ENCODE measurements at regions of chr1 and their contacts with region 1.

Region 1: GRCh38 chr1:53182111-53182593 is 14.5 kb upstream of the CPT2 start:
- DNase-seq: no peak
- H3K4me3 ChIP-seq: no peak overlapping the region
- H3K27ac ChIP-seq: peak overlapping the region in 3 of 4 donors; percentile 8 to 79 (median 35)
- H3K4me1 ChIP-seq: peaks cover 0 to 14% (median 10%) of the 10 kb centered on the region in 3 donors
- H3K27me3 ChIP-seq: peaks cover 0 to 4% (median 0%) of the 10 kb centered on the region in 4 donors
- CTCF ChIP-seq: peak; percentile 78 to 92 (median 87)
- POLR2A ChIP-seq: no peak

Region 2: GRCh38 chr1:52702886-52703787 is 479.0 kb before region 1 on chr1:
- intact Hi-C with region 1: loop called (anchors 10 kb)
- DNase-seq: peak; percentile 80
- H3K4me3 ChIP-seq: peak overlapping the region; percentile 42 to 73 (median 55)
- H3K27ac ChIP-seq: peak overlapping the region; percentile 77 to 91 (median 84)
- H3K4me1 ChIP-seq: peaks cover 9 to 43% (median 11%) of the 10 kb centered on the region in 3 donors
- H3K27me3 ChIP-seq: no peaks in the 10 kb centered on the region
- CTCF ChIP-seq: no peak
- POLR2A ChIP-seq: peak in 1 of 4 donors; percentile 46

Region 3: DNA sequence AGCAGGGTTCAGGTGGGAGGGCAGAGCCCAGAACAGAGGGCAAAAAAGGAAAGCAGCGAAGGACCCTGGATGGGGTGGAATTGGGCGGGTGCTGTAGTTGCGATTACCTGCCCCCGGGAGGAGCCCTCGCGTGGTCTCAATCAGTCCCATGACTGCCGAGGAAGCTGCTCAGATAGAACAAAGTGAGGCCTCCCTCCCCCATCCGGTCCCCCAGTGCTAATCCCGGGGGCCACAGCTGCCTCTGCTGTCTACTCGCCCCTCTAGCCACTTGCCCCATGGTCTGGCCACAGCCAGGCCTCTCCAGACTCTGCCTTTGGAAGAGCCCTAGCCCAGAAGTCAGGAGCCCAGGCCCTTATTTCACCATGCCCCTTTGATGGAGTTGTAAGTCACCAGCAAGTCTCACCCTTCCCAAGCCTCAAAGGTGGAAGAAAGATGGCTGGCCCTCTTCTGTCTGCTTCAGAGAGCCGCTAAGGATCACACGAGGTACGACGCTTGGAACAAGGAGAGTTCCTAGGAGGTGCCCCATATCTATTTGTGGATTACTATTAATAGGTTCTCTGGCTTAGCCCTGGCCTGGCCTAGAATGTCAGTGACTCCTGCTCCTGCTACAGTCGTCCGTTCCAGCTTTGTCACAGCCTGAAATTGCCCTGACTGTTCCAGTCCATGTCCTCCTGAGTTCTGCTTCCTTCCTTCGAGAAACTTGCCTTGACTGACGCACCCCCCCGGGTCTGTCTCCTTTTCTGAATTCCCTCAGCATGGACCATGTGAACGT is 277.0 kb before region 1 on chr1:
- intact Hi-C with region 1: loop called (anchors 10 kb)
- DNase-seq: no peak
- H3K4me3 ChIP-seq: no peak overlapping the region
- H3K27ac ChIP-seq: no peak overlapping the region
- H3K4me1 ChIP-seq: peaks cover 0 to 20% (median 4%) of the 10 kb centered on the region in 3 donors
- H3K27me3 ChIP-seq: no peaks in the 10 kb centered on the region
- CTCF ChIP-seq: peak in 2 of 6 experiments; percentile 23 to 39
- POLR2A ChIP-seq: no peak

Region 4: GRCh38 chr1:52976183-52977035 is 205.7 kb before region 1 on chr1:
- intact Hi-C with region 1: no loop called
- DNase-seq: no peak
- H3K4me3 ChIP-seq: no peak overlapping the region
- H3K27ac ChIP-seq: no peak overlapping the region
- H3K4me1 ChIP-seq: no peaks in the 10 kb centered on the region
- H3K27me3 ChIP-seq: no peaks in the 10 kb centered on the region
- CTCF ChIP-seq: no peak
- POLR2A ChIP-seq: no peak

Region 5: DNA sequence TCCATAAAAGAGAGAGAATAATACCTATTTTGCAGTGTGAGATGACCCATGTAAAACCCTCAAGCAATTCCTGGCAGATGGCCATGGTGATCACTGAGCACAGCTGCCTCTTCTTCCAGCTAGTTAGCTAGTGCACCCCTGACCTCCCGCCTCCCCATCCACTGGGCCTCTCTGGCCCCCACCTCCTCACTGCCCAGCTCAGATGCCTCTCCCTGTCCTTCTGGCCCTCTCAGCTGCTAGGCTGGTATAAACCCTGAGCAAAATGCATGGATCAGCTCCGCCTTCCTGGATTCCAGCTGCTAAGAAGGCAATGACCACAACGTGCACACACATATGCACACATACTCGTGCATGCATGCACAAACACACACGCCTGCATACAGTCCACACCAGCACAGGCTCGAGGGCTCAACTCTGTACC is 394.2 kb after region 1 on chr1:
- intact Hi-C with region 1: no loop called
- DNase-seq: no peak
- H3K4me3 ChIP-seq: no peak overlapping the region
- H3K27ac ChIP-seq: no peak overlapping the region
- H3K4me1 ChIP-seq: peaks cover 0 to 20% (median 11%) of the 10 kb centered on the region in 3 donors
- H3K27me3 ChIP-seq: no peaks in the 10 kb centered on the region
- CTCF ChIP-seq: no peak
- POLR2A ChIP-seq: no peak